Breast epithelium (tissue), 4 donors: ENCODE measurements at regions of chr1 and their contacts with region 1.

Region 1: DNA sequence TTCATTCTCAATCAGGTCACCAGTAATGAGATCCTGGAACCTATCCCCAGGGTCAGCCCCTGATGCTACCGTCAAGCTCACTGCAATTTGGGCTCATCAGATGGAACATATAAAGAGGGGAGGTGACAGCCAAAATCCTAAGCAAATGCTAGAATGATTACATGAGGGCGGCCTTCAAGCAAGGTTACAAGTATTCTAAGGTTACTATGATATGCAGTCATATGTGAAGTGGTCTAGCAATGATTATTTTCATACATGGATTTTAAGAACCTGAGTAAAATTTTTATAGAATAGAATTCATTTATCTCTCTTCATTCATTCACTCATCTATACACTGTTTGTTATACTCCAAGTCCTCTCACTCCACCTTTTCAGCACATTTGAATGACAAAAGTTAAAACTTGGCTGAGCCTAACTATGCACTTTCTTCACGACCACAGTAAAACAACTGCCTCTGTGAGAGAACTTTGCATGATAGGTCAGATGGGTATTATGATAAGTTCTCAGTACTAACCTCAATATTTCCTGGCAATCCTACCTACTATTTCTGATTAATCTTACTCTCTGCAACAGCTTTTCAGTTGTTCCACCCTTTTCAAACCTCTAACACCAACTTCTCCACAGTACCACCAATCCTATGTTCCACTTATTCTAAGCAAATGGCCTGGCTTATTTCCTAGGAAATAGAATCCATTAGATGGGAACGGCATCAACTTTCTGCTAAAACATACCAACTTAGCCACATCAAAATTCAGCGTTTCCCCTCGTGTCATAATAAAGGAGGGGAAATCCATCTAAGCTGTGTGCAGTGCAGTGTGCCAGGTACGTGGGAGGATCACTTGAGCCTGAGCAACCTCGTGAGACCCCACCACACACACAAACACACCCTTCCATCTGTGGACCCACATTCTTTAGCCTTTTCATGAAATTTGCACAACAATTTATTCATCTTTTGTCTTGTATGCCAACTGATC is 32.0 kb downstream of the LHX9 start:
- DNase-seq: no peak
- H3K4me3 ChIP-seq: no peak overlapping the region
- H3K27ac ChIP-seq: no peak overlapping the region
- H3K4me1 ChIP-seq: no peaks in the 10 kb centered on the region
- H3K27me3 ChIP-seq: no peaks in the 10 kb centered on the region
- CTCF ChIP-seq: no peak
- POLR2A ChIP-seq: no peak

Region 2: GRCh38 chr1:197884173-197884572 is 65.0 kb before region 1 on chr1:
- intact Hi-C with region 1: loop called (anchors 2 kb)
- DNase-seq: no peak
- H3K4me3 ChIP-seq: no peak overlapping the region
- H3K27ac ChIP-seq: no peak overlapping the region
- H3K4me1 ChIP-seq: no peaks in the 10 kb centered on the region
- H3K27me3 ChIP-seq: no peaks in the 10 kb centered on the region
- CTCF ChIP-seq: no peak
- POLR2A ChIP-seq: no peak